Endothelial cell of umbilical vein (primary cell): ENCODE measurements at regions of chr11 and their contacts with region 1.

Region 1: DNA sequence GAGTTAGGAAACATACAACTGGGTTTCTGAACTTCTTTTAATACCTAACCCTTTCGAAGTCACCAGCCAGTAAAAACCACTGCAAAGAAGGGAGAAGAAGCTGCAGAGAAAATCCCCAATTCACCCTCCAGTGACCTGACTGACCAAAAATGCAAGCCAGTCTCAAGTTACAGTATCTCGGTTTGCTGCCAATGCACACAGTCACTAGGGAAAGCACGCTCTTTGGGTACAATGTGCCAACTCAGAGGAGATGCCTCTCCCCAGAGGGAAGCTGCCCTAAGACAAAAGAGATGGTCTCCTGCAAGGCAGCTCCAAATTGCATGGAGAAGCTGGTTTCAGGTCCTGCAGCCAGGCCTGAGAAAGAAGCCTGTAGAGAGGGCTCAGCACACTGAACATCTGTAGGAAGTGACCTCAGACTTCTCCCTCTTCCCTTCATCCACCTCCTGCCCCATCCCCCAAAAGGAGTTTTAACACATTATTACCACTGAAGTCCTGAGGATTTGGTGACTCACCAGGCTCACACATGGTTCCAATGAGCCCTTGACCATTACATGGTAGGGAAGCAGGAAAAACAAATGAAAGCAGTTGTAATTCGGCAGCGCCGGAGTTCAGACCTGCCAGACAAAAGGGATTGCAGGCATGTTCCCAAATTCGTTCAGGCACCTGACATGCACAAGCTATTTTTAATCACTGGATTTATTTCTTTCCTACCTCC is 90.1 kb downstream of the ETS1 start:
- DNase-seq: peak; percentile 96
- H3K4me3 ChIP-seq: peak overlapping the region in 1 of 3 experiments; percentile 28
- H3K27ac ChIP-seq: peak overlapping the region; percentile 94
- H3K4me1 ChIP-seq: peaks cover 67% of the 10 kb centered on the region
- H3K27me3 ChIP-seq: no peaks in the 10 kb centered on the region
- CTCF ChIP-seq: no peak
- POLR2A ChIP-seq: no peak

Region 2: GRCh38 chr11:127733552-127733951 is 763.7 kb before region 1 on chr11:
- CTCF ChIA-PET with region 1: no interaction called
- POLR2A ChIA-PET with region 1: no interaction called
- dilution Hi-C with region 1: no loop called
- intact Hi-C with region 1: no loop called
- DNase-seq: peak; percentile 61
- H3K4me3 ChIP-seq: no peak overlapping the region
- H3K27ac ChIP-seq: no peak overlapping the region
- H3K4me1 ChIP-seq: no peaks in the 10 kb centered on the region
- H3K27me3 ChIP-seq: no peaks in the 10 kb centered on the region
- CTCF ChIP-seq: no peak
- POLR2A ChIP-seq: no peak

Region 3: DNA sequence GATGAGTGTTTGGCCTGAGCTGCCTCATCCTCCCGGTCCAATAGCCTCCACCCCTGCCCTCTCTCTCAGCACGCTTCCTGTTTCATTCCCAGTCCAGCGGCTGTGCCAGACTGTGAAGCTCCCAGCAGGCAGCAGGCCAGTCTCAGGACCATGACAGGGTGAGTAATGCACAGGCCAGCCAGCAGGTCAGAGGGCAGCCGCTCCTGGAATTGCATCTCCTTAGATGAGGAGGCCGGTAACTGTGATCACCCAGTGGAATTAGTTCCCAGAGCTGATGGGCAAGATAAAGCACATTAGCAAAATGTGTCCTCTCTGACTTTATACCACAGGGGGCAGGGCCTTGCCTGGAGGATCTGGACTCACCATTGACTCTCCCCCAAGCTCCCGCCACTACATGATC is 161.0 kb before region 1 on chr11:
- CTCF ChIA-PET with region 1: interaction called, 3 read pairs
- POLR2A ChIA-PET with region 1: no interaction called
- dilution Hi-C with region 1: no loop called
- intact Hi-C with region 1: loop called (anchors 2 kb)
- DNase-seq: peak; percentile 88
- H3K4me3 ChIP-seq: no peak overlapping the region
- H3K27ac ChIP-seq: peak overlapping the region; percentile 87
- H3K4me1 ChIP-seq: peaks cover 43% of the 10 kb centered on the region
- H3K27me3 ChIP-seq: no peaks in the 10 kb centered on the region
- CTCF ChIP-seq: no peak
- POLR2A ChIP-seq: peak; percentile 17

Region 4: DNA sequence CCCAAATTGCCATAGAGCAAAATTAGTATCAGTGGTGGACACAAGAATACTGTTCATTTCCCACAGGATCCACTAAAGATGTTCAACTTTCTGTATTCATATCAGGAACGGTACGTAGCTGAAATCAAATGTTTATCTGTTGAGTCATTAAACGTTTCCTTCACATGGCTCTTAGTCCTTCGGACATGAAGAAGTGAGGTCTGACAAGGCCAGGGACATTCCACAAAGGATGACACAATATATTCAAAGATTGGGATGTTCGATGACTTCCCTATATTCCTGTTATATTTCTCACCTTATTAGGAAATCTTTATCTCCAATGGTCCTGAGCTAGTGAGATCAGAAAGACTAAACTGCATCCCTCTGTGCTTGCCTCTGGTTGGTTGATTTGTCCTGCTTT is 38.9 kb before region 1 on chr11:
- CTCF ChIA-PET with region 1: interaction called, 3 read pairs
- POLR2A ChIA-PET with region 1: no interaction called
- dilution Hi-C with region 1: no loop called
- intact Hi-C with region 1: loop called (anchors 2 kb)
- DNase-seq: peak; percentile 62
- H3K4me3 ChIP-seq: no peak overlapping the region
- H3K27ac ChIP-seq: peak overlapping the region; percentile 61
- H3K4me1 ChIP-seq: peaks cover 11% of the 10 kb centered on the region
- H3K27me3 ChIP-seq: no peaks in the 10 kb centered on the region
- CTCF ChIP-seq: no peak
- POLR2A ChIP-seq: no peak